KBM-7 (cell line): ENCODE measurements at regions of chr3 and their contacts with region 1.

Region 1: GRCh38 chr3:64484289-64484992 is 203.4 kb downstream of the ADAMTS9 start:
- DNase-seq: peak; percentile 74

Region 2: DNA sequence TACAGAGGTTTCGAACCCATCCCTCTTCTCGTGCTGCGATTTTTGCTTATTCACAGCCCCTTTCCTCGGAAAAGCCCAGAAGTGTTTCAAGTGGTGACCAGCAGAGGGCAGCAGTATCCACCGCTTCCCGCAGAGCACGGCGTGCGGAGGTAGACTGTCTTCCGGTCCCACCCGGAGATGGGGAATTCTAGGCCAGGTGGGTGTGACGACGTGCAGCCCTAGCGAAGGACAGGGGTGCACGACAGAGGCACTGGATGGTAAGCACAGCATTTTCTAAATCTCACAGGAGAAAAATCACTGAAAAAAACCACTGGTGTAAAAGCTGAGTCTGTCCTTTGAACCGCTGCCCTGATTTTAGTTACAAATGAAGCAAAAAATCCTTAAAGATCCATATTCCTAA is 453.7 kb before region 1 on chr3:
- in situ Hi-C with region 1: loop called (anchors 25 kb)
- DNase-seq: peak; percentile 75

Region 3: DNA sequence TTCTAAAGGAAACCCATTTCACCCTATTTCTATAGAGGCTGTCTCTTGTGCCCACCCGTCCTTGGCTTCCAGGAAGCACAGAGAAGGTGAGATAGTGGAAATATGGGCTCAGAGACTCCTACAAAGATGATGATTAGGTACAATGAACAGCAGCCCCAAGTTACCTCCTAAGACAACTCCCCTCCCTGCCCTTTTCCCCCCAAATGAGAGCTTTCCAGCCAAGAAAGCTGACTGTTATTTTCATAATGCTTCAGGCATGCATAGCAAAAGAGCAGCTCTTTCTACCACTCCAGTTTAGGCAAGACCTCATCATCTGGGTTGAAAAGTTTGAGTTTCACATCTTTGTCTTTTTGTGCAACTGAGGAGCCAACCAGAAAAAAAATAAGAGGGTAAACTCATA is 452.1 kb after region 1 on chr3:
- in situ Hi-C with region 1: no loop called
- DNase-seq: no peak